Cardiac septum (tissue), 1 donor: ENCODE measurements at regions of chr11 and their contacts with region 1.

Region 1: DNA sequence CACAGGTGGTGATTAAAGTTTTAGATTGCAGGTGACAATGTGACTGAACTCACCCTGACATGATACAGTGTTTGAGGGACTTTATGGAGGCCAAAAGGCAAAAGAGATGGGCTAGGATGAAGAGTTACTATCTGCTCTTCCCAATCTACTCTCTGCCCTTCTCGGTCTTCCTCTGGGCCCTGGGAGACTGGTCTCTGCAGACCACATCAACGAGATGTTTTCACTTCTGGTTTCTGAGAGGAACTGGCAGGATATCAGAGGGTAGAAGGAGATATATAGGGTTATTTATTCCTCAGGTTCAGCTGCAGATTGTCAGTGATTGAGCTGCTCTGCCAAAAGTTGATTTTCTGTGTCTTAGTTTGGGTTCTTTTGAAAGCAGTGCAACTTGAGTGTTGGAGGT is 32.4 kb upstream of the CD44 start:
- DNase-seq: no peak

Region 2: DNA sequence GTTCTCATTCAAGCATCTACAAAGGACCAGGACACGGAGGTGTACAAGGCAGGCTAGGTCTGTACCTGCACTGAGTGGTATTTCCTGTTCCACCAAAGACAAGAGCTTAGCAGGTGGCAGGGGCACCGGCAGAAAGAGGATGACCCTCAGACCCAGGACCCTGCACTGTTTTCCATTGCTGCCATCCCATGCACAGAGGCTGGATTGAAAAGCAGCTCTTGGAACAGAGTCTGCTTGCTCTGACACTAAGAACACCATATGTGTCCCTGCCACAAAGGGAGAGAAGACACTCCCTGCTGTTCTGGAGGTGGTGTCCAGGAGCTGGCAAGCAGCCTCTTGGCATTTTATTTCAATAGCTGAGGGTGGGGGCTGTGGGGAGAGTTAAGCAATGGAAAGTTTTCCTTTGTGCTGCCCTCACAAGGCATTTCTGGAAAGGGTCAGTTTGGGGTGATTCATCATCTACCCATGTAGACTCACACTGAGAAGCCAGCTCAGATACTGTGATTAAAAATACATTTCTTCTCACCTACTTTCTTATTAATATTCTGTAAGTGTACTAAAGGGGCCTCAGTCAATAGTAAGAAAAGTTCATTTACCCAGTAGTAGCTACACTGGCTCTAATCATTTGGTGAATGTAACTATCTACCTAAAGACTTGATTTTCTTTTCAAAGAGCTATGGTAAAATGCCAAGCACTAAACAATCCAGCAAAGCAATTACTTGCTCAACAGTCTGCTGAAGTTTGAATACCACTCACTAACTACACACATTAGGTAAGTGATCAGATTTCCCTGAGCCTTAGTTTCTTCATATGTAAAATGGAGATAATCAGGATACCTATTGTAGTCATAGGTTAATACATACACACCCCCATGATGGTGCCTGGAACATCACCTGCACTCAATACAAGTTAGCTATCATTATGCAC is 257.5 kb after region 1 on chr11:
- intact Hi-C with region 1: loop called (anchors 10 kb)
- DNase-seq: no peak